ENCODE measurements at regions of chr3 and their contacts with region 1.

Region 1: GRCh38 chr3:49469936-49470713 is at the start of gene DAG1:
- DNase-seq: peak; percentile 87 to 98
- H3K4me3 ChIP-seq: peak within 1 kb of the TSS; percentile 74 to 94 (median 84)
- H3K27ac ChIP-seq: peak within 1 kb of the TSS; percentile 92
- H3K4me1 ChIP-seq: peaks cover 6 to 19% (median 13%) of the 10 kb centered on the region in 4 experiments
- H3K27me3 ChIP-seq: no peaks in the 10 kb centered on the region
- CTCF ChIP-seq: no peak
- EP300 ChIP-seq: no peak
- POLR2A ChIP-seq: peak; percentile 58 to 83
- RAD21 ChIP-seq: no peak
- total RNA-seq, gene DAG1: 137 and 138 TPM in 2 replicates

Region 2: GRCh38 chr3:49358217-49358883 is 111.8 kb before region 1 on chr3 and contains the start of gene GPX1:
- CTCF ChIA-PET with region 1: interaction called, 4 read pairs
- POLR2A ChIA-PET with region 1: interaction called, 14 read pairs
- DNase-seq: peak; percentile 89 to 96
- H3K4me3 ChIP-seq: peak within 1 kb of the TSS; percentile 58 to 90 (median 86)
- H3K27ac ChIP-seq: peak within 1 kb of the TSS; percentile 92
- H3K4me1 ChIP-seq: peaks cover 1 to 3% (median 3%) of the 10 kb centered on the region in 4 experiments; a peak in 4 of 7 replicates
- H3K27me3 ChIP-seq: no peaks in the 10 kb centered on the region
- CTCF ChIP-seq: no peak
- EP300 ChIP-seq: no peak; a peak in 1 of 3 replicates
- POLR2A ChIP-seq: peak; percentile 70 to 75
- RAD21 ChIP-seq: peak in 1 of 2 experiments; percentile 8; a peak in 1 of 4 replicates
- total RNA-seq, gene GPX1: 250 and 252 TPM in 2 replicates

Region 3: DNA sequence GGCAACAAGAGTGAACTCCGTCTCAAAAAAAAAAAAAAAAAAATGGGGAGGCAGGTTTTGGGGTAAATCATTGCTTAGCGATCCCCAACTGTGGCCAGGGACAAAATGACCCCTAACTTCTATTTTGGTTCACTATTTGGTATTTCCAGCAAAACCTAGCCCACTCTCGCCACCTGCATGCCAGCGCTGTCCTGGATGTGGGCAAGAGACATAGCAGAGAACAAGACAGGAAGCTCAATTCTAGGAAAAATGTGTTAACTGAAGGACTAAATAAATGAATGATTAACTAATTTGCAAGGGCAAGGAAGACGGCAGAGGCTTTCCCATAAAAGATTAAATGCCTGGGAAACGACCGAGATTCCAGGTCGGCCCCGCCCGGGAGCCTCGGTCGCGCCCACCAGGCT is 41.4 kb before region 1 on chr3:
- CTCF ChIA-PET with region 1: no interaction called
- POLR2A ChIA-PET with region 1: interaction called, 11 read pairs
- DNase-seq: no peak
- H3K4me3 ChIP-seq: peak overlapping the region; percentile 52 to 84 (median 77)
- H3K27ac ChIP-seq: no peak overlapping the region
- H3K4me1 ChIP-seq: no peaks in the 10 kb centered on the region; a peak in 1 of 7 replicates
- H3K27me3 ChIP-seq: no peaks in the 10 kb centered on the region
- CTCF ChIP-seq: no peak
- EP300 ChIP-seq: no peak
- POLR2A ChIP-seq: no peak
- RAD21 ChIP-seq: no peak; a peak in 1 of 4 replicates

Region 4: GRCh38 chr3:49484471-49484870 is 14.3 kb after region 1 on chr3:
- CTCF ChIA-PET with region 1: interaction called, 4 read pairs
- POLR2A ChIA-PET with region 1: interaction called, 36 read pairs
- DNase-seq: no peak
- H3K4me3 ChIP-seq: no peak overlapping the region
- H3K27ac ChIP-seq: no peak overlapping the region
- H3K4me1 ChIP-seq: no peaks in the 10 kb centered on the region
- H3K27me3 ChIP-seq: no peaks in the 10 kb centered on the region
- CTCF ChIP-seq: no peak
- EP300 ChIP-seq: no peak
- POLR2A ChIP-seq: no peak
- RAD21 ChIP-seq: no peak